ENCODE measurements at regions of chr11 and their contacts with region 1.

Region 1: GRCh38 chr11:73779084-73779902 is 8.4 kb upstream of the MRPL48 start:
- H3K4me3 Mint-ChIP-seq: peak overlapping the region; percentile 93
- H3K27ac Mint-ChIP-seq: peak overlapping the region; percentile 98
- H3K4me1 Mint-ChIP-seq: no peaks in the 10 kb centered on the region
- H3K27me3 Mint-ChIP-seq: peaks cover 4% of the 10 kb centered on the region

Region 2: DNA sequence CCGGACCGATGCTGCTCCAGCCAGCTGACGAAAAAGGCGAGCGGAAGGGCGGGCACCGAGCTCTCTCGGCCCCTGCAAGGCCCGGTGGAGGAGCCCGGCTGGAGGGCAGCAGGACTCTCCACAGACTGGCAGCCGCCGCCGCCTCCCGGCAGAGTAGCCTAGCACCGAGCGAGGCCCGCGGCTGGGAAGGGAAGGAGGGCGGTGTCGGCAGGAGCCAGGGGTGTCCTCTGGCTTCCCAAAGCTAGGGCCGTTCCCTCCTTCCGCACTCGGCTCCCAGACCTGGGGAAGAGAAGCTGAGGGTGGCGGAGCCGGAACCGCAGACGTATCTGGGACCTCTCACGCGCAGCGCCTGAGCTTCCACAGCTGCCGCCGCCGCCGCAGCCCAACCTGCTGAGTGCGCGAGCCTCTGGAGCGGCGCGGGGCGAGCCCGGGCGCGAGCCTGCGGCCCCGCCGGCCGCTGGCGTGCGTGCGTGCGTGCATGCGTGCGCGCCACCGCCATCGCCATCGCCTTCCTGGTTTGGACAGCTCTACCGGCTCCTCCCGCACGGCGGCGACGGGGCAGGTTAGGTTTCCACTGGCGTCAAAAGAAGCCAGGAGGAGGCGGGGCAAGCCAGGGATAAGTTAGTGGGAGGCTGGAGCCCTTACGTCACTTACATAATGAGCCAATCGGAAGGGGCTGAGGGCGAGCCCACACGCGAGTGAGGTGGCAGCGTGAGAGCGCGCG is 18.5 kb before region 1 on chr11 and contains the start of gene RAB6A:
- intact Hi-C with region 1: loop called (anchors 1 kb)
- H3K4me3 Mint-ChIP-seq: peak within 1 kb of the TSS; percentile 92
- H3K27ac Mint-ChIP-seq: peak within 1 kb of the TSS; percentile 94
- H3K4me1 Mint-ChIP-seq: peaks cover 48% of the 10 kb centered on the region
- H3K27me3 Mint-ChIP-seq: peaks cover 2% of the 10 kb centered on the region

Region 3: DNA sequence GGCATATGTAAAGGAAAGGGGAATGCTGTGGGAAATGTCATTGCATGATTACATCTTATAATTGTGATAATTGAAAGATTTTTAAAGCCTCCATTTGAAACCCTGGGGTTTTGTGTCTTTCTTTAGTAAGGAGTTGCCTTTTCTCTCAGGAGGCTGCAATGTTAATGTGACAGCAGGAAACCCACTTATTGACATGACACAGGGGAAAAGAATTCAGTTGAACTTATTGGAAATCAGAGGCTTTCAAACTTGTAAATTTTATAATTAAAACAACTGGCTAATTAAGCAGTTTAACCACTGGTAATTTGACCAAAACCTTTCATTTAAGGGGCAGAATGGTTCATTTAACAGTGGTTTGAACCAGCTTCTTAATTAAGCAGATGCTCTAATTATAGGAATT is 39.6 kb after region 1 on chr11:
- intact Hi-C with region 1: no loop called
- H3K4me3 Mint-ChIP-seq: no peak overlapping the region
- H3K27ac Mint-ChIP-seq: no peak overlapping the region
- H3K4me1 Mint-ChIP-seq: no peaks in the 10 kb centered on the region
- H3K27me3 Mint-ChIP-seq: no peaks in the 10 kb centered on the region

Measured in dendritic cell treated with granulocyte-macrophage colony-stimulating factor and Interleukin-4, amounts not matched to agents 40 ng/mL and 50 ng/mL, for 4 days (primary cell).